ENCODE measurements at regions of chr7 and their contacts with region 1.

Region 1: GRCh38 chr7:5596046-5596895 is 172.6 kb upstream of the TNRC18 start:
- DNase-seq: peak; percentile 53 to 94 (median 70)
- ATAC-seq: peak; percentile 31
- H3K4me3 ChIP-seq: peak overlapping the region; percentile 72
- H3K27ac ChIP-seq: peak overlapping the region; percentile 92
- H3K4me1 ChIP-seq: peaks cover 40 to 89% of the 10 kb centered on the region in 2 experiments
- H3K27me3 ChIP-seq: no peaks in the 10 kb centered on the region
- CTCF ChIP-seq: no peak
- EP300 ChIP-seq: peak; percentile 20; the same call in 1 of the 2 replicates
- POLR2A ChIP-seq: no peak; the same call in 1 of the 2 replicates
- RAD21 ChIP-seq: no peak; a peak in 1 of 4 replicates

Region 2: GRCh38 chr7:5519515-5519928 is 76.7 kb before region 1 on chr7:
- CTCF ChIA-PET with region 1: no interaction called
- POLR2A ChIA-PET with region 1: no interaction called
- in situ Hi-C with region 1: no loop called
- intact Hi-C with region 1: no loop called
- DNase-seq: no peak
- ATAC-seq: no peak
- H3K4me3 ChIP-seq: no peak overlapping the region
- H3K27ac ChIP-seq: no peak overlapping the region
- H3K4me1 ChIP-seq: peaks cover 0 to under 1% of the 10 kb centered on the region in 2 experiments; a peak in 1 of 5 replicates
- H3K27me3 ChIP-seq: no peaks in the 10 kb centered on the region
- CTCF ChIP-seq: no peak
- EP300 ChIP-seq: no peak
- POLR2A ChIP-seq: no peak
- RAD21 ChIP-seq: no peak

Region 3: DNA sequence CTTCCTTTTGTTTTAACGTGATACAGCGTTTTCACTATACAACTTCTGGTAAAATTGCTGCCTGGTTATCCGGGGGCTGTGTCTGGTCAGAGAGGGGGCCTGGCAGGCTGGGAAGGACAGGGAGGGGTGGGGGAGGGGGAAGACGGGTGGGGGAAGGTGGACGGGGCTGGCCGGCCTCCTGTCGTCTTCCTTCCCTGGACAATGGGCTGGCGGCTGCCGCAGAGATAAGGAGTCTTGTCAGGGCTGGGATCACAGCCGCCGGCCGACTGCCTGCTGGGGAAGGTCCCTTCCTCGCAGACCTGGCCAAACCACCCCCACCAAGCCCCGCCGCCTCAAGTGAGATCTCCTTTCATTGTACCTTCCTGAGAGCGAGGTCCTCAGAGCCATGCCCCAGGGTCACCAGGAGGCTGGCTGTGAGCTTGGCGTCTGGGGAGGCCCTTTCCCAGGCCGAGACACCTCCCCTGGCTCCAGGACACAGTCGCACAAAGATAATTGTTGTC is 21.5 kb before region 1 on chr7:
- CTCF ChIA-PET with region 1: no interaction called
- POLR2A ChIA-PET with region 1: interaction called, 7 read pairs
- in situ Hi-C with region 1: no loop called
- intact Hi-C with region 1: loop called (anchors 1 kb)
- DNase-seq: peak; percentile 87 to 95 (median 89)
- ATAC-seq: peak; percentile 78
- H3K4me3 ChIP-seq: peak overlapping the region; percentile 30
- H3K27ac ChIP-seq: peak overlapping the region; percentile 100
- H3K4me1 ChIP-seq: peaks cover 25 to 64% of the 10 kb centered on the region in 2 experiments
- H3K27me3 ChIP-seq: no peaks in the 10 kb centered on the region
- CTCF ChIP-seq: no peak
- EP300 ChIP-seq: peak; percentile 71
- POLR2A ChIP-seq: peak; percentile 64
- RAD21 ChIP-seq: 0 out of 4 replicates have a peak, but pooled peaks of 1 of the 2 experiments have one; percentile 9

Region 4: DNA sequence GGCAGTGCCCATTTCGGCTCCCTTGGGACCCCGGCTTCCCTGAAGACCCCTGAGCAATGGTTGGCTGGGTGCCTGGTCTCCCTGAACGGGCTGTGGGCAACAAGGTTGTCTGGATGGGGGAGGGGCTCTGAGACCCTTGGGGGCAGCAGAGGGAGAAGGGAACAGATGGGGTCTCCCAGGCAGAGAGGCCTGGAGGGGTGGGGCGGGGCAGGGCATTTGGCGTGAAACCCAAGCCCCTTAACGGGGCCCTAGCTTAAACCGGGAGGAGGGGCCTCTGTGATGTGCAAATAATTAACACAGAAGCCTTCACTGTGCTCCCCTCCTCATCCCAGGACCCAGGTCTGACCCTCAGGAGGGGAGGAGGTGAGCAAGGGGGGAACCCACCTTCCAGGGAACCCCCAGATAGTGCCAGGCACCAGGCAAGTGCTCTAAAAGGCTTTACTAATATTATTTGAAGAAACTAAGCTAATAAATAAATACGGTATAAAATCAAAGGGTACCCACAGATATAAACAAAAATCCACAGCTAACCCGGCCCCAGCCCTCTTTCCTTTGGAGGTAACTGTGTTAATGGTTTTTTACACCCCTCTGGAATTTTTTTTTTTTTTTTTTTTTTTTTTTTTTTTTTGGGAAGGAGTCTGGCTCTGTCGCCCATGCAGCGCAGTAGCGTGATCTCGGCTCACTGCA is 14.4 kb after region 1 on chr7:
- CTCF ChIA-PET with region 1: no interaction called
- POLR2A ChIA-PET with region 1: interaction called, 11 read pairs
- in situ Hi-C with region 1: no loop called
- intact Hi-C with region 1: no loop called
- DNase-seq: no peak
- ATAC-seq: no peak
- H3K4me3 ChIP-seq: no peak overlapping the region
- H3K27ac ChIP-seq: peak overlapping the region; percentile 80; the same call in 1 of the 3 replicates
- H3K4me1 ChIP-seq: peaks cover 3 to 64% of the 10 kb centered on the region in 2 experiments; a peak in 4 of 5 replicates
- H3K27me3 ChIP-seq: no peaks in the 10 kb centered on the region
- CTCF ChIP-seq: no peak
- EP300 ChIP-seq: no peak
- POLR2A ChIP-seq: no peak
- RAD21 ChIP-seq: no peak

Region 5: DNA sequence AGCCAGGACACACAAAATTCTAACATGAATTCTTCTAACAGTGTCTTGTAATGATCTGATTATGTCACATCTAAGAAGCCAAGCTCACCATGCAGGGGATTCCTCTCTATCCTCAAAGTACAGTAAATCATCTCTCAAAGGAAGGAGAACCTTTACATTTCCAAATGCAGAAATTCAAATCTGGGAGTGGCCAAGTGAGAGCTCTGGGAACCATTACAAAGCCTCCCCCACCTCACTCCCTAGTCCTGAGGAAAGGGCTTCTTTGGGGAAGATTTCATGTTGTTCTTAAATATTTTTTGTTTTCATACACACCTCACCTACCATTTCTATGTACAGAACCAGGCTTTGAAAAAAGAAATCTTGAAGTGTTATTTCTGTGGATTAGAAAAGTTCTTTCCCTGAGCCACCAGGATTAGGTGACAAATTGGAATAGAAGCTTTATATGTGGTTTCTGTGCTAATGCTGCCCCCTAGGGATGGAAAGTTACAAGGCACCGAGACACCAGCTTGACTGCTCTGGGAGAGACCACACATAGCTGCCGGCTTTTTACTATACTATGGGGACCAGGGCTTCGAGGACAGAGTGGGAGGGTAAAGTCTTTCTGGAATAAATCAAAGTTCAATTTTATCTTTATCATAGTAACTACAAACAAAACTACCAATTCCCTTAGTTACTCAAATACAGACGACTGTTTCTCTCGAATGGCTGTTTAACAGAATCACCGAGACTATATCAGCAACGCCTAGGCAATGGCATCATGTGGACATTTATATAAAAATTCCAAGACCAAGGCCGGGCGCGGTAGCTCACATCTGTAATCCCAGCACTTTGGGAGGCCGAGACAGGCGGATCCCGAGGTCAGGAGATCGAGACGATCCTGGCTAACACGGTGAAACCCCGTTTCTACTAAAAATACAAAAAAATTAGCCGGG is 69.1 kb after region 1 on chr7:
- CTCF ChIA-PET with region 1: no interaction called
- POLR2A ChIA-PET with region 1: interaction called, 3 read pairs
- in situ Hi-C with region 1: no loop called
- intact Hi-C with region 1: loop called (anchors 1 kb)
- DNase-seq: peak; percentile 71 to 88 (median 77)
- ATAC-seq: peak; percentile 96
- H3K4me3 ChIP-seq: no peak overlapping the region
- H3K27ac ChIP-seq: no peak overlapping the region
- H3K4me1 ChIP-seq: peaks cover 5 to 13% of the 10 kb centered on the region in 2 experiments; a peak in 4 of 5 replicates
- H3K27me3 ChIP-seq: no peaks in the 10 kb centered on the region
- CTCF ChIP-seq: peak; percentile 84 to 89 (median 85)
- EP300 ChIP-seq: 0 out of 2 replicates have a peak, but pooled peaks have one; percentile 10
- POLR2A ChIP-seq: no peak
- RAD21 ChIP-seq: peak; percentile 94 to 97

Region 6: GRCh38 chr7:5704534-5704922 is 108.3 kb after region 1 on chr7:
- CTCF ChIA-PET with region 1: no interaction called
- POLR2A ChIA-PET with region 1: no interaction called
- in situ Hi-C with region 1: no loop called
- intact Hi-C with region 1: no loop called
- DNase-seq: peak; percentile 62 to 85 (median 70)
- ATAC-seq: peak; percentile 96
- H3K4me3 ChIP-seq: no peak overlapping the region
- H3K27ac ChIP-seq: no peak overlapping the region; the same call in 2 of the 3 replicates
- H3K4me1 ChIP-seq: peaks cover 0 to 3% of the 10 kb centered on the region in 2 experiments; a peak in 3 of 5 replicates
- H3K27me3 ChIP-seq: no peaks in the 10 kb centered on the region
- CTCF ChIP-seq: peak; percentile 78 to 95 (median 91)
- EP300 ChIP-seq: no peak
- POLR2A ChIP-seq: no peak
- RAD21 ChIP-seq: peak; percentile 80 to 89